CD8-positive, alpha-beta memory T cell (primary cell): ENCODE measurements at regions of chr2 and their contacts with region 1.

Region 1: GRCh38 chr2:223993621-223994232 is 36.5 kb downstream of the MRPL44 start:
- DNase-seq: peak; percentile 34 to 60 (median 36)
- H3K4me3 ChIP-seq: no peak overlapping the region
- H3K4me3 Mint-ChIP-seq: no peak overlapping the region
- H3K27ac ChIP-seq: no peak overlapping the region
- H3K27ac Mint-ChIP-seq: no peak overlapping the region
- H3K4me1 ChIP-seq: no peaks in the 10 kb centered on the region
- H3K4me1 Mint-ChIP-seq: no peaks in the 10 kb centered on the region
- H3K27me3 ChIP-seq: no peaks in the 10 kb centered on the region
- H3K27me3 Mint-ChIP-seq: peaks cover 6 to 20% of the 10 kb centered on the region in 2 donors

Region 2: GRCh38 chr2:223930103-223930976 is 63.4 kb before region 1 on chr2:
- CTCF ChIA-PET with region 1: no interaction called
- POLR2A ChIA-PET with region 1: no interaction called
- DNase-seq: no peak
- H3K4me3 ChIP-seq: no peak overlapping the region
- H3K4me3 Mint-ChIP-seq: peak overlapping the region in 6 of 7 donors; percentile 57 to 74 (median 64)
- H3K27ac ChIP-seq: no peak overlapping the region
- H3K27ac Mint-ChIP-seq: peak overlapping the region; percentile 11 to 89 (median 82)
- H3K4me1 ChIP-seq: peaks cover 27% of the 10 kb centered on the region
- H3K4me1 Mint-ChIP-seq: peaks cover 53 to 82% (median 68%) of the 10 kb centered on the region in 3 donors
- H3K27me3 ChIP-seq: no peaks in the 10 kb centered on the region
- H3K27me3 Mint-ChIP-seq: no peaks in the 10 kb centered on the region

Region 3: GRCh38 chr2:223970343-223971128 is 23.2 kb before region 1 on chr2:
- CTCF ChIA-PET with region 1: interaction called, 18 read pairs
- POLR2A ChIA-PET with region 1: no interaction called
- DNase-seq: peak; percentile 26 to 54 (median 35)
- H3K4me3 ChIP-seq: no peak overlapping the region
- H3K4me3 Mint-ChIP-seq: no peak overlapping the region
- H3K27ac ChIP-seq: no peak overlapping the region
- H3K27ac Mint-ChIP-seq: peak overlapping the region in 1 of 8 donors; percentile 64
- H3K4me1 ChIP-seq: no peaks in the 10 kb centered on the region
- H3K4me1 Mint-ChIP-seq: peaks cover 3 to 16% (median 5%) of the 10 kb centered on the region in 3 donors
- H3K27me3 ChIP-seq: no peaks in the 10 kb centered on the region
- H3K27me3 Mint-ChIP-seq: no peaks in the 10 kb centered on the region

Region 4: DNA sequence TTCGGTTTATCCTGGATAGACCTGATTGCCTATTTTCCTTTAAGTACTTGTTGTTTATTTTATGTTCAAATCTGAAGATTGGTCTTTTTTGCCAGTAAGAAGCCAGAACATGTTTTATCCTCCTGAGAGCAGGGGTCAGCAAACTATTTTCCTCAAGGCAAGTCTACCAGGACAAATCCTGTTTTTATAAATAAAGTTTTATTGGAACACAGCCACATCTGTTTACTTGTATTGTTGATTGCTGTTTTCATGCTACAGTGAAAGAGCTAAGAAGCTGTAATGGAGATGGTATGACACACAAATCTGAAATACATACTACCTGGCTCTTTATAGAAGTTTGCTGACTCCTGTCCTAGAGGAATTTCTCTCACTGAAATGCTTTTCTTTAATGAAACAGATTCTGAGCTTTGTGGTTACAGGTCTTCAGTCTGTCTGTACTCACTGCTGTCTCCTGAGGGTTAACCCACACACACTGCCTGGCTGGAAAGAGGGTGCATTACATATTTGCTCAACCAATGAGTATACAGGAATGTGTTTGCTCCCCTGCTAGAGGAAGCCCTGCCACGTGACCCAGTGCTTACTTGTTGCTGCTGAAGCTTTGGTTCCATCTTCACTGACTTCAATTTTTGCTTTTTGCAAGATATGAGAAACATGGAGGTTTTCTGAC is 13.9 kb before region 1 on chr2:
- CTCF ChIA-PET with region 1: interaction called, 14 read pairs
- POLR2A ChIA-PET with region 1: no interaction called
- DNase-seq: no peak
- H3K4me3 ChIP-seq: no peak overlapping the region
- H3K4me3 Mint-ChIP-seq: no peak overlapping the region
- H3K27ac ChIP-seq: no peak overlapping the region
- H3K27ac Mint-ChIP-seq: no peak overlapping the region
- H3K4me1 ChIP-seq: no peaks in the 10 kb centered on the region
- H3K4me1 Mint-ChIP-seq: no peaks in the 10 kb centered on the region
- H3K27me3 ChIP-seq: peaks cover 4% of the 10 kb centered on the region
- H3K27me3 Mint-ChIP-seq: peaks cover 2 to 16% of the 10 kb centered on the region in 2 donors

Region 5: DNA sequence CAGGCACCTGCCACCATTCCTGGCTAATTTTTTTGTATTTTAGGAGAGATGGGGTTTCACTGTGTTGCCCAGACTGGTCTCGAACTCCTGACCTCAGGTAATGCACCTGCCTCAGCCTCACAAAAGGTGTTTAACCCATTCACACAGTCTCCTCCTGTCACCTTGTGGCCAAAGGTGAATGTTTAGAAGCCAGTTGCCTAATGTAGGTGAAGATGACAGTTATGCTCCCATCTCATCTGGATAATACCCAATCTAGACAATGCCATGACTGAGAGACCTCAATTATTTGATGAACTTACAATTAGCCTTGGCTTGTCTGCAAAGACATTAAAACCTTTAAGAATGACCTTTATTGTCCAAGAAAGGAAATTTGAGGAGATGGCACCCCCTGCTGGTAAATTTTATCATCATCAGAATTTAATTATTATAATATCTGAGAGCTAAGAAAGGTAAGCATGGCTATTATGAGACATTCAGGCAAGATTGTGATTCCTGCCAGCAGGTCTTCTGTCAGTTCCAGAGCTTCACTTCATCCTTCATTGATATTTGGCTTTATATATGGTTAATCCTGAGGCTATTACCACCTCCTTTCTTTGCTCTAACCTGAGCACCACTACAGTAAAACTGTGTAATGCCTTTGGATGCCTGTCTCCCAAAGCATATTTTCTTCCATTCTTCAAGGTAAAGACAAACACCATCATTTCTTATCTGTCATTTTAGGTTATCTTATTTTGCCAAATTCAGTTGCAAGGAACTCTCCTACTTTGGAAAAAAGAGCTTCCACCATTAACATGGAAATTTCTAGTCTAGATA is 290.6 kb after region 1 on chr2:
- CTCF ChIA-PET with region 1: interaction called, 40 read pairs
- POLR2A ChIA-PET with region 1: no interaction called
- DNase-seq: peak in 2 of 5 donors; percentile 13 to 40
- H3K4me3 ChIP-seq: no peak overlapping the region
- H3K4me3 Mint-ChIP-seq: no peak overlapping the region
- H3K27ac ChIP-seq: no peak overlapping the region
- H3K27ac Mint-ChIP-seq: no peak overlapping the region
- H3K4me1 ChIP-seq: no peaks in the 10 kb centered on the region
- H3K4me1 Mint-ChIP-seq: no peaks in the 10 kb centered on the region
- H3K27me3 ChIP-seq: no peaks in the 10 kb centered on the region
- H3K27me3 Mint-ChIP-seq: peaks cover 5 to 63% of the 10 kb centered on the region in 2 donors